GM10248 (cell line): ENCODE measurements at regions of chr5 and their contacts with region 1.

Region 1: GRCh38 chr5:42950440-42951292 is 89.5 kb downstream of the ANXA2R start:
- DNase-seq: peak; percentile 62
- CTCF ChIP-seq: no peak

Region 2: GRCh38 chr5:43008369-43009153 is 57.9 kb after region 1 on chr5:
- CTCF ChIA-PET with region 1: interaction called, 10 read pairs
- POLR2A ChIA-PET with region 1: no interaction called
- DNase-seq: peak; percentile 73
- CTCF ChIP-seq: peak; percentile 32